Sciatic nerve (tissue), 2 donors: ENCODE measurements at regions of chr9 and their contacts with region 1.

Region 1: GRCh38 chr9:34403554-34404380 is 27.1 kb upstream of the MYORG start:
- DNase-seq: peak; percentile 82
- ATAC-seq: peak; percentile 71

Region 2: DNA sequence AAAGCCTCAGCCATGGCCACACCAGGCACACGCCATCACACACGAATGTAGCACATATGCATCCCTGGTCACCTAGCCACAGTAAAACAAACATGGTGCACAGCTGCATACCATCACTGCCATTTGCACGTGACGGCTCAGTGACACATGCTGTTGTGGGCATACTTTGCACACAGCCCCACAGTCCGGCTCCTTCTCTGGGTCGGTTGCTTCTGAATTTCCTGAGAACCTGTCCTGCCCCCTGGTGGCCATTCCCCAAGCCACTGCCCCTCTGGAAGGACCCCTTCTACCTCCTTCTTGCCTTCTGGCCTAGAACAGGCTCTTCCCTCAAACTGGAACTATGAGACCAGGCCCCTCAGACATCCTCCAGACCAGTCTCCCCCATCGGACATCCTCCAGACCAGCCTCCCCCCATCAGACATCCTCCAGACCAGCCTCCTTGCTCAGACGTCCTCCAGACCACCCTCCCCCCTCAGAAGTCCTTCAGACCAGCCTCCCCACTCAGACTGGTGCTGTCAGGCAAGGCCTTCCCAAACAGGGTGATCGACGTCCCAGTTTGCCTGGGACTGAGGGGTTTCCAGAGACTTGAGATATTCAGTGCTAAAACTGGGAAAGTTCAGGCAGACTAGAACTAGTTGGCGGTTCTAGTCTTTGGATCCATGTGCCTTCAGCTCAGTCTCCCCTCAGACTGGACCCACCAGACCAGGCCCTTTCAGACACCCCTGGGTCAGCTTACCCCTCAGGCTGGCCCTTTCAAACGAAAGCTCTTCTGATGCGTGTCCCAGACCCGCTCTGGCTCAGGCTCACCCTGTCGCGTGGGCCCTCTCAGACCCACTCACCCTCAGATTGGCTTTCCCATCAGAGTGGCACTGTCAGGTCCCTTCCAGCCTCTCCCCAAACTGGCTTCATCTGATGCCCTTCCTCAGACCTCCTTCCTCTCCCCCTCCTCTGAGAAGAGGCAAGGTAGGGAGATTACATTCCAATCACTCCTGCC is 143.4 kb after region 1 on chr9:
- intact Hi-C with region 1: loop called (anchors 5 kb)
- DNase-seq: peak; percentile 85
- ATAC-seq: peak; percentile 76

Region 3: GRCh38 chr9:34591248-34591916 is 187.6 kb after region 1 on chr9:
- intact Hi-C with region 1: loop called (anchors 5 kb)
- DNase-seq: peak; percentile 95
- ATAC-seq: peak; percentile 88

Region 4: GRCh38 chr9:34701769-34702736 is 298.3 kb after region 1 on chr9:
- intact Hi-C with region 1: loop called (anchors 10 kb)
- DNase-seq: peak; percentile 94
- ATAC-seq: peak; percentile 95